ENCODE measurements at regions of chr1 and their contacts with region 1.

Region 1: GRCh38 chr1:61453111-61453961 is 271.6 kb downstream of the TM2D1 start:
- DNase-seq: peak; percentile 87
- H3K4me3 ChIP-seq: no peak overlapping the region
- H3K27ac ChIP-seq: peak overlapping the region; percentile 84
- H3K4me1 ChIP-seq: peaks cover 63% of the 10 kb centered on the region
- H3K27me3 ChIP-seq: no peaks in the 10 kb centered on the region
- CTCF ChIP-seq: peak; percentile 87

Region 2: GRCh38 chr1:61184040-61184713 is 269.2 kb before region 1 on chr1:
- intact Hi-C with region 1: loop called (anchors 10 kb)
- DNase-seq: peak; percentile 93
- H3K4me3 ChIP-seq: peak overlapping the region; percentile 62
- H3K27ac ChIP-seq: peak overlapping the region; percentile 93
- H3K4me1 ChIP-seq: peaks cover 91% of the 10 kb centered on the region
- H3K27me3 ChIP-seq: no peaks in the 10 kb centered on the region
- CTCF ChIP-seq: no peak

Region 3: DNA sequence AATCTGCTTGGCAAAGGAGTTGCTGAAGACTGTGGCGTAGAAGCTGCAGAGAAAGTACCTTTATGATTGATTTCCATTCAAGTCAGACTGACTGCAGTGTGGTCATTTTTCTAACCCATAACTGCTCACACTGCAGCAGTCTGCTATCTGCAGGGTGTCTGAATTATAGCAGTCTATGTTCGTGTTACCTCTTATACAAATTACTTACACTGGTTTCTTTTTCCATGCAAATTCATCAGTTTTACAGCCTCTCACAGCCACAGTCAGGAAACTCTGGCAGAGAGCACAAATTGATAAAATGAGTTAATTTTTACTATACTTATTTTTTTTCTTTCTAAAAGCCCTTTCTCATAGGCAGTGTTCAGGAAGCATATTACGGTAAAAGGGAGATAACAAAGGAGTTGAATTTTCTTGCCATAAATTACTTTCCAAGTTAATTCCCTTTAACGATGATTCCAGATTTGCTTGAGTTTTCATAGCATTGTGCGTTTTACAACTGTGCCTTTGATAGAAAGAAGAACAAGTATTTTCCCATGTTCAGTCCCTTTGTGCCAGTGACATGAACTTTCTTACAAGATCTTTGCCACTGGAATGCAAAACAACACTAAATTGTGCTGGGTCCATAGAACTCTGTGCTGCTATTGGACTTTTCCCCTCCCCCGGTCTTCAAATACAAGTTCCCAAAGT is 109.5 kb before region 1 on chr1:
- intact Hi-C with region 1: loop called (anchors 10 kb)
- DNase-seq: no peak
- H3K4me3 ChIP-seq: no peak overlapping the region
- H3K27ac ChIP-seq: peak overlapping the region; percentile 53
- H3K4me1 ChIP-seq: peaks cover 37% of the 10 kb centered on the region
- H3K27me3 ChIP-seq: no peaks in the 10 kb centered on the region
- CTCF ChIP-seq: no peak